ENCODE measurements at regions of chr17 and their contacts with region 1.

Region 1: DNA sequence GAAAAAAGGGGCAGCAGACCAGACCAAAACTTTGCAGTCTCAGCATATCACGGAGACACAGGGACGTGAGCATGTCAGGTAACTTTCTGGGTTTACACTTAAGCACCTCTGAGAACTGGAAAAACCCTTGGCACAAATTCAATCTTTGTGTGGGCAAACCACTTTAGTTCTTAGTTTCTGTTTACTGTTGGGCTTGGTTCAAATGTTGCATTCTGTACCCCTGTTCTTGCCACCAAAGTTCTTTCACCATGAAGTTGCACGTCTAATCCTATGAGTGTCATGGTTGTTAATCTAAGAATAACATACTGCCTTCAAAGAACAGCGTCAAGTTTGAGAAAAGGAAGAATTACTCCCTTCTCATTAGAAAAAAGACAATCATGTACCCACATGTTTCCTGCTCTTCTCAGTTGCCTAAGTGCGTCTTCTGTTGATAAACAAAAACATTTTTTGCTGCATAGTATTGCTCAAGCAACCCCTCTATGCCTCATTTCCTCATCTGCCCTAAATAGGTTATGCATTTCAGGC is 11.6 kb downstream of the KRT33A start:
- DNase-seq: peak in 7 of 9 donors; percentile 71 to 93 (median 88)
- ATAC-seq: peak; percentile 90
- H3K4me3 ChIP-seq: no peak overlapping the region
- H3K4me3 Mint-ChIP-seq: peak overlapping the region; percentile 28 to 81 (median 74)
- H3K27ac ChIP-seq: peak overlapping the region; percentile 87
- H3K27ac Mint-ChIP-seq: peak overlapping the region; percentile 92 to 99 (median 96)
- H3K4me1 ChIP-seq: peaks cover 78 to 85% of the 10 kb centered on the region in 2 donors
- H3K4me1 Mint-ChIP-seq: peaks cover 47 to 99% (median 85%) of the 10 kb centered on the region in 7 donors
- H3K27me3 ChIP-seq: no peaks in the 10 kb centered on the region
- H3K27me3 Mint-ChIP-seq: peaks cover 0 to 14% (median 0%) of the 10 kb centered on the region in 5 donors

Region 2: GRCh38 chr17:41308251-41308917 is 30.6 kb before region 1 on chr17:
- CTCF ChIA-PET with region 1: interaction called, 5 read pairs
- POLR2A ChIA-PET with region 1: interaction called, 18 read pairs
- intact Hi-C with region 1: loop called in 1 of 2 experiments (anchors 1 kb)
- DNase-seq: peak in 8 of 9 donors; percentile 56 to 94 (median 92)
- ATAC-seq: peak; percentile 91
- H3K4me3 ChIP-seq: peak overlapping the region; percentile 24
- H3K4me3 Mint-ChIP-seq: peak overlapping the region; percentile 65 to 89 (median 78)
- H3K27ac ChIP-seq: peak overlapping the region; percentile 75
- H3K27ac Mint-ChIP-seq: peak overlapping the region; percentile 82 to 100 (median 98)
- H3K4me1 ChIP-seq: peaks cover 41 to 49% of the 10 kb centered on the region in 2 donors
- H3K4me1 Mint-ChIP-seq: peaks cover 28 to 80% (median 70%) of the 10 kb centered on the region in 7 donors
- H3K27me3 ChIP-seq: no peaks in the 10 kb centered on the region
- H3K27me3 Mint-ChIP-seq: peaks cover 0 to 8% (median 0%) of the 10 kb centered on the region in 5 donors

Region 3: DNA sequence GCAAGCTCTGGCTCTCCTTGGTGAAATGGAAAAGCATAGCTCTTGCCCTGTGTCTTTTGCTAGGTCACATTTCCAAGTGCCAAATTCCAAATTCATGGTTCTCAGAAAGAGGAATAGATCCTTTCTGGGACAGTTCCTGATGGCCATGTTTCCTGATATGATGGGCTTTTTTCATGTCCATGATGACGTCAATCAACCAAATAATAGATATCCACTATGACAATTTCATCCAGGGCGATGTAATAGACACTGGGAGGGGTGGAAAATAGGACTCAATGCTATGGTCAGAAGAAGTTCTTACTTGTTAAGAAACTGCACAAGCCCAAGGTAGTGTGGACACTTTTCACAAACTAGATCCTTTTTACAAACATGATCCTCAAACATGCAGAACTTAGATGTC is 12.2 kb after region 1 on chr17:
- CTCF ChIA-PET with region 1: interaction called, 3 read pairs
- POLR2A ChIA-PET with region 1: interaction called, 10 read pairs
- intact Hi-C with region 1: no loop called
- DNase-seq: no peak
- ATAC-seq: no peak
- H3K4me3 ChIP-seq: no peak overlapping the region
- H3K4me3 Mint-ChIP-seq: peak overlapping the region in 1 of 10 donors; percentile 9
- H3K27ac ChIP-seq: no peak overlapping the region
- H3K27ac Mint-ChIP-seq: peak overlapping the region in 1 of 9 donors; percentile 16
- H3K4me1 ChIP-seq: peaks cover 0 to 10% of the 10 kb centered on the region in 2 donors
- H3K4me1 Mint-ChIP-seq: peaks cover 4 to 28% (median 16%) of the 10 kb centered on the region in 7 donors
- H3K27me3 ChIP-seq: no peaks in the 10 kb centered on the region
- H3K27me3 Mint-ChIP-seq: peaks cover 0 to 30% (median 0%) of the 10 kb centered on the region in 5 donors

Region 4: DNA sequence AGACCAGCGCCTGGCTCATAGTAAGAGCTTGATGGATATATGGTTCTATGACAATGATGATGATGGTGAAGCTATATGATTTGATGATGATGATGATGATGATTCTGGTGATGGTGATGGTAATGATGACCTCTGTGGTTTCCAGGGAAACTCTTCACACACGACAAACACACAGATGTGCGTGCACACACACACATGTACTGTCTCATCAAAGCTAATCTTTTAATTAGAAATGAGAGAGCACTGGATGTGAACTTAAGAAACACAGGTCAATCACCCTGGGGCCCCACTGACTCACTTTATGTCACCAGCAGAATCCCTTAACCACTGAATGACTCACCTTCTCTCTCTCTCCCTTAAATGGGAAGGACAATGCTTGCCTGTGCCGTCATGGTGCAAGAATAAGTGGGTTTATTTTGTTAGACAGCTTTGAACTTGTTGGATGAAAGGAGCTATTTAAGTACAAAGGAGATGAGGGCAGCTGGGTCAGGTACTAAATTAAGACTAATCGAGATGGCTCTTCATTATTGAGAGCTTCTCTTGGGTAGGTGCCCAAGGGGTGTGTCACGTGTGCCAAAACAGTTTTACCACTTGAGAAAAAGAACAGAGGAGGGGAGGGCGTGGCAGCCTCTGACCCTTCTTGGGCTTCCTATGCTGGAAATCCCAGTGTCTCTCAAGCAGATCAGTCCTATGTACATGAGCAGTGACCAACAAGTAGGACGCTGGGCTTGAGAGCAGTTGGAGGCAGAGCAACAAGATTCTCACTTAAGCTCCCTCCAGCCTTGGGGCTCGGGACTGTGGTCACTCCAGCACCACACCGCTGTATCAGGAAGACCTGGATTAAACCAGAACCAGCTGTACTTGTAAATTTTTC is 65.0 kb after region 1 on chr17:
- CTCF ChIA-PET with region 1: no interaction called
- POLR2A ChIA-PET with region 1: no interaction called
- intact Hi-C with region 1: loop called in 1 of 2 experiments (anchors 5 kb)
- DNase-seq: peak in 1 of 9 donors; percentile 46
- ATAC-seq: peak; percentile 62
- H3K4me3 ChIP-seq: no peak overlapping the region
- H3K4me3 Mint-ChIP-seq: peak overlapping the region in 2 of 10 donors; percentile 4 to 39
- H3K27ac ChIP-seq: no peak overlapping the region
- H3K27ac Mint-ChIP-seq: peak overlapping the region in 4 of 9 donors; percentile 3 to 69 (median 13)
- H3K4me1 ChIP-seq: peaks cover 16 to 17% of the 10 kb centered on the region in 2 donors
- H3K4me1 Mint-ChIP-seq: peaks cover 18 to 43% (median 33%) of the 10 kb centered on the region in 7 donors
- H3K27me3 ChIP-seq: no peaks in the 10 kb centered on the region
- H3K27me3 Mint-ChIP-seq: peaks cover 0 to 6% (median 0%) of the 10 kb centered on the region in 5 donors

Region 5: DNA sequence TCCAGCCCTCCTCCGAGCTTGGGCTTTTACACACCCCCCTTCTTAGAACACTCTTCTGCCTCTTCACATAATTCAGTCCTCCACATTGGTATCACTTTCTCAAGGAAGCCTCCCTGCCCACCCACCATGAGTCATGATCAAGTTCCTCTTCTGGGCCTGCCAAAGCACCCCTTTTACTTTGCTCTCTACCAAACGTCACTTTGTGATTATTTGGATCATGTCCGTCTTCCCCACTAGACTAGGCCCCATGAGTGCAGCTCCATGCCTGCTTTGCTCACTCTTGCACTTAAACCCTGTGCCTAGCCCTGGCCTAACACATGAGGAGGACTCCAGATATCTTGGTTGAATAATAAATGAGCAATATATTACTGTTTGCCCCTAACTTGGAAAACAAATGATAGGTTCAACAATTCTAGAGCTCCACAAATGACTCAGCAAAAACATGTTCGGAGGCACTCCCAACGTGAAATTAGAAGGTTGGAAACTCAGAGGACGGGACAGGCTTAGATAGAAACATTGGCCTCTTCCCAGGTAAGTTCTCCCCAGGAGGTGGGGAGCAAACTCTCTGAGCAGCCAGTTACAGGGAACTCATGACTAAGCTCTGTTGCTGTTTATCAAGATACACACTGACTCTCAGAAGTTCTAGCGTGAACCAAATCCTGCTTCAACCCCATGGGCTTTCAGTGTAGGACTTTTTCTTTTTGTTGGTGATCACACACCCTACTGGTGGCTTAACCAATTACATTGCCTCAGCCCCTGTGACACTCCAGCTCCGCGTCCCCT is 1589.9 kb after region 1 on chr17:
- CTCF ChIA-PET with region 1: no interaction called
- POLR2A ChIA-PET with region 1: no interaction called
- intact Hi-C with region 1: no loop called
- DNase-seq: peak in 2 of 9 donors; percentile 4 to 24
- ATAC-seq: peak; percentile 88
- H3K4me3 ChIP-seq: no peak overlapping the region
- H3K4me3 Mint-ChIP-seq: no peak overlapping the region
- H3K27ac ChIP-seq: no peak overlapping the region
- H3K27ac Mint-ChIP-seq: peak overlapping the region in 2 of 9 donors; percentile 2 to 36
- H3K4me1 ChIP-seq: no peaks in the 10 kb centered on the region
- H3K4me1 Mint-ChIP-seq: peaks cover 0 to 12% (median 4%) of the 10 kb centered on the region in 7 donors
- H3K27me3 ChIP-seq: no peaks in the 10 kb centered on the region
- H3K27me3 Mint-ChIP-seq: peaks cover 0 to 4% (median 0%) of the 10 kb centered on the region in 5 donors